ENCODE measurements at regions of chr7 and their contacts with region 1.

Region 1: DNA sequence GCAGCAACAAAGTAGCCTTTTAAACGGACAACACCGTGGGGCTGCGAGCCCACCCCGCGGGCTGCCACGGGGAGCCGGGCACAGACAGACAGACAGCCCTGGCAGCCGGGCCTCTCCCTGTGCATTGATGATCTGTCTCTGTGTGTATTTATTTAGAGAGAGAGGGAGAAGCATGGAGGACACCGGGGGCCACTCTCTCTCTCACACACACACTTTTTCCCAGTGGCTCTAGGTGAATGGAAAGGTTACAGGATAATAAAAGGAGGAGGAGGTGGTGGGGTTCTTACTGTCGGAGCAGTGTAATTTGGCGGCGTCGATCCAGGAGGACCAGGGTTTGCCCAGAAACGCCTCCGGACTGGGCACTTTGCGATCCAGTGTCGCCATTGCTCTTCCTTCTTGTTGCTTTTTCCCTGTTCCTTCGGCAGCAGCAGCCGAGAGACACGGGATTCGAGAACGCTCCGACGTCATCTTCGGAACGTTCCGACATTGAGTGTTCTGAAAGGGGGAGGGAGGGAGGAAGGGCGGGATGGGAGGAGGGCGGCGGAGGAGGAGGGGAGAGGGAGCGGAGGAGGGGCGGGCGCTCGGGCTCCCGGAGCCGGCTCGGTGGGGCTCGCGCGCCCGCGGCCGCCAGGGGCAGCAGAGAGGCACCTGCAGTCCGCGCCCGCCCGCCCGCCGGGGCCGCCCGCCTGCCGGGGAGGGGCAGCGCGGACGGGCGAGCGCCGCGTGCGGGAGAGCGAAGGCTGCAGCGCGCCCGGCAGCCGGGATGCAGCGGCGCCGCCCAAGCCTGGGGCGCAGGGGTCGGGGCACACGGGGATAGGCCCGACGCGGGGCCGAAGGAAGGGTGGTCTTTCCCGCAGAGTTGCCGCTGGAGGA is at the start of gene ATXN7L1:
- DNase-seq: peak; percentile 84 to 96
- H3K4me3 ChIP-seq: peak within 1 kb of the TSS; percentile 76 to 99
- H3K27ac ChIP-seq: peak within 1 kb of the TSS; percentile 58 to 76
- H3K4me1 ChIP-seq: peaks cover 3 to 4% of the 10 kb centered on the region in 2 donors
- H3K27me3 ChIP-seq: no peaks in the 10 kb centered on the region
- CTCF ChIP-seq: peak; percentile 28 to 89 (median 52)
- total RNA-seq, gene ATXN7L1: 7.5 TPM

Region 2: GRCh38 chr7:105522062-105522936 is 354.0 kb before region 1 on chr7 and contains the start of gene PUS7:
- intact Hi-C with region 1: loop called (anchors 10 kb)
- DNase-seq: peak; percentile 30 to 94
- H3K4me3 ChIP-seq: peak within 1 kb of the TSS; percentile 58 to 97
- H3K27ac ChIP-seq: peak within 1 kb of the TSS; percentile 80 to 90
- H3K4me1 ChIP-seq: peaks cover 5 to 8% of the 10 kb centered on the region in 2 donors
- H3K27me3 ChIP-seq: no peaks in the 10 kb centered on the region
- CTCF ChIP-seq: no peak
- total RNA-seq, gene PUS7: 17.2 TPM

Region 3: DNA sequence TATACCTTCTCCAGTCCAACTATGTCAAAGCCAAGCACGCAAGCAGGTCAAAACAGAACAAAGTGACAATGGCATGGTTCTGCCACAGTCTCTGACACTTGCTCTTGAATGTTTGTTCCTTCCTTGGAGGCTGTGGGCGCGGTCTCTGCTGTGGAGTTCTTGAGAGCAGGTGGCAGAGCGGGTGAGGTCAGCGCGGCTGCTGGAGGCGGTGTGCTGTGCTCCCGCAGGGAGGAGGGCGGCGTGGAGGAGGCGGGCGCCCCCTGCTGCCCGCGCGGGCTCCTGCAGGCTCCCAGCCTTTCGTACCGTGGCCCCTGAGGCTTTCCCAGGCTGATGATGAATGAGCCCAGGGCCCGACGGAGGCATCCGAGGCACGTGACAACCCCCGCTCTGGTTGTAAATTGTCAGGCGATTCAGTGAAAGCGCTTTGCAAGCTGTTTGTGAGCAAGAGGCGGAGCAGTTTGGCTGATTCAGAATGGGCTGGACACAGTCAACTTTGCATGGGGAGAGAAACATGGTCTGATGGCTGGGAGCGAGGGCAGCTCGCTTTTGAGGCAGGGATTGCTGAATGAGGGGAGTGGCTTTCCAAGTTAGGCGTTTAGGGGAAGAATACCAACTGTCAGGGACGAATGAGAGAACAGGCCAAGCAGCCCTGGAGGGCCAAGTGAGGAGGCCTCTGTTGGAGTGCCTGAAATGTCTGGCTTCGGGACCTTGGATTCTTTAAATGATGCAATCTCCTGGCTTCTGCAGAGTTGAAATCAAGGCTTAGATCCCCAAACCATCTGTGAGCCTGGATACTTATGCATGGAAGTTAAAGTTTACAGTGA is 133.3 kb after region 1 on chr7:
- intact Hi-C with region 1: loop called (anchors 5 kb)
- DNase-seq: peak; percentile 54 to 85
- H3K4me3 ChIP-seq: peak overlapping the region in 1 of 2 donors; percentile 40
- H3K27ac ChIP-seq: no peak overlapping the region
- H3K4me1 ChIP-seq: no peaks in the 10 kb centered on the region
- H3K27me3 ChIP-seq: no peaks in the 10 kb centered on the region
- CTCF ChIP-seq: peak; percentile 83 to 98 (median 86)

Region 4: DNA sequence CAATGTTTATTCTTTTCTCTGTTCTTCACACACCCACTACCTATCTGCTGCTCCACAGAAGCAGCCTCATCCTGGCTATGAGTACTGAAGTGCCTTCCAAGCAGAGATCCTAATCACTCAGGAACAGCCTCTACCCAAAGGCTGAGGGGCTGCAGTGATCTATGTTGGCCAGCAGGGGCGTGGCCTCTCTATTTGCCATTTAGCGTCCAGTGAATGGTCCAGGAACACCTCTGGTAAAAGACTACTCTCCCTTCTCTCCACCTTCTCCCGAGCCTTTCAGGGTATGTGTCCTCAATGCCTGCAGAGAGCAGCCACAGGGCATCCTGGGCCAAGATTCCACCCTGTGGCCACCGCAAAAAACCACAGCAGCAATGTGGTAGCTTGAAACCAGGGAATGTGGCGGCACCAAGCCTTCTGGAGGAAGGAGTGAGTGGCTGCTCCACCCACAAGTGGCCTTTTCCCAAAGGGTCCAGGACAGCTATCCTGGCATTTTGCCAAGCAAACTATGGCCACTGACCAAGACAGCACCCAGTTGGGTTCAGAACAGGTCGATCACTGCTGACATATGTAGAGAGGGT is 164.9 kb after region 1 on chr7:
- intact Hi-C with region 1: loop called (anchors 5 kb)
- DNase-seq: no peak
- H3K4me3 ChIP-seq: no peak overlapping the region
- H3K27ac ChIP-seq: no peak overlapping the region
- H3K4me1 ChIP-seq: no peaks in the 10 kb centered on the region
- H3K27me3 ChIP-seq: no peaks in the 10 kb centered on the region
- CTCF ChIP-seq: peak; percentile 25 to 66 (median 46)

Region 5: GRCh38 chr7:106064771-106065585 is 188.7 kb after region 1 on chr7:
- intact Hi-C with region 1: loop called (anchors 1 kb)
- DNase-seq: peak; percentile 82 to 93
- H3K4me3 ChIP-seq: peak overlapping the region; percentile 37 to 50
- H3K27ac ChIP-seq: peak overlapping the region; percentile 68 to 75
- H3K4me1 ChIP-seq: peaks cover 7 to 9% of the 10 kb centered on the region in 2 donors
- H3K27me3 ChIP-seq: no peaks in the 10 kb centered on the region
- CTCF ChIP-seq: no peak

Region 6: GRCh38 chr7:106112117-106112971 is 236.0 kb after region 1 on chr7 and contains the start of gene SYPL1:
- intact Hi-C with region 1: loop called (anchors 2 kb)
- DNase-seq: peak; percentile 70 to 95
- H3K4me3 ChIP-seq: peak within 1 kb of the TSS; percentile 69 to 76
- H3K27ac ChIP-seq: peak within 1 kb of the TSS; percentile 98
- H3K4me1 ChIP-seq: peaks cover 3 to 12% of the 10 kb centered on the region in 2 donors
- H3K27me3 ChIP-seq: no peaks in the 10 kb centered on the region
- CTCF ChIP-seq: peak in 1 of 3 experiments; percentile 16
- total RNA-seq, gene SYPL1: 17.5 TPM

Region 7: DNA sequence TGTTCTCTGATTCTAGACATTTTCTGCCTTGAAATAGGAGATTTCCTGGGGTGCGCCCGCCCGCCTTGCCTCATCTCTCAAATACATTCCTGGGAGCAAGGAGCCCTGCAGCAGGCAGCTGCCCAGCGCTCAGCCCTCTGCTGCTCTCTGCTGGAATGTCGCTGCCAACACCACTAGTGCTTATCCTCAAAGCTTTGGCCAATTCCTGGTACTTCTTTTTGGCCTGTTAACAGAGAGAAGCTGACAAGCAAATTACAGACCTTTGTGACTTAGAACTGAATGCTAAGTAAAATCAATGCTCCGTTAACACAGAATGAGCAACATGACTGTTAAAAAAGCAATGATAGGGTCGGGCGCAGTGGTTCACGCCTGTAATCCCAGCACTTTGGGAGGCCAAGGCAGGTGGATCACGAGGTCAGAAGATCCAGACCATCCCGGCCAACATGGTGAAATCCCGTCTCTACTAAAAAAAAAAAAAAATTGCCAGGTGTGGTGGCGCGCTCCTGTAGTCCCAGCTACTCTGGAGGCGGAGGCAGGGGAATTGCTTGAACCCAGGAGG is 277.6 kb after region 1 on chr7:
- intact Hi-C with region 1: loop called (anchors 10 kb)
- DNase-seq: peak in 1 of 2 donors; percentile 89
- H3K4me3 ChIP-seq: no peak overlapping the region
- H3K27ac ChIP-seq: no peak overlapping the region
- H3K4me1 ChIP-seq: no peaks in the 10 kb centered on the region
- H3K27me3 ChIP-seq: no peaks in the 10 kb centered on the region
- CTCF ChIP-seq: peak; percentile 85 to 96 (median 91)